ENCODE measurements at regions of chr19 and their contacts with region 1.

Region 1: GRCh38 chr19:45250832-45251451 is at the start of gene MARK4:
- DNase-seq: no peak
- H3K4me3 ChIP-seq: peak within 1 kb of the TSS; percentile 94 to 99 (median 98)
- H3K27ac ChIP-seq: peak within 1 kb of the TSS; percentile 80 to 86 (median 83)
- H3K4me1 ChIP-seq: peaks cover 31 to 62% (median 54%) of the 10 kb centered on the region in 4 donors
- H3K27me3 ChIP-seq: no peaks in the 10 kb centered on the region
- CTCF ChIP-seq: no peak
- EP300 ChIP-seq: no peak
- POLR2A ChIP-seq: no peak
- total RNA-seq, gene MARK4: 17.4 to 36.9 (median 27.5) TPM

Region 2: DNA sequence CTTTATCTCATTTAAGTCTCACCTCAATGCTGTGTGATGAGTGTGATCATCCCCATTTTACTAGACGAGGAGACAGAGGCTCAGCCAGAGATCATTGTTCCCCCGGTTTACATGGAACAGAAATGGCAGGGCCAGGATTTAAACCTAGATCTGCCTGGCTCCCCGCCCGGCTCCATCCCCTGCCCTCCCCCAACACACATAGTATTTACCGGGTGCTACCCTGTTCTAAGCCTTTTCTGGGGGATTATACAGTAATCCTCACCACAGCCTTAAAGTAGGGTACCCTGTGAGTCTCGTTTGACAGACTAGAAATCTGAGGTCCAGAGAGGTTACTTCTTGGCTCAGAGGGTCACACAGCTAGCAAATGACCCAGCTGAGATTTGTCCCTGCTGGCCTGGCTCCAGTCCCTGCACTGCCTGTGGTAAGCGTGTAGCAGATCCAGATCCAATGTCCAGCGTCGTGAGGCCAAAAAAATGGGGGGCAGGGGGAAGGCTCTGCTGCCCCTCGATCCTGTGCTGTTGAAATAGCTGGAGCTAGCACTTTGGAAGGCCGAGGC is 85.8 kb after region 1 on chr19:
- intact Hi-C with region 1: loop called (anchors 5 kb)
- DNase-seq: no peak
- H3K4me3 ChIP-seq: no peak overlapping the region
- H3K27ac ChIP-seq: no peak overlapping the region
- H3K4me1 ChIP-seq: peaks cover 4 to 21% (median 15%) of the 10 kb centered on the region in 4 donors
- H3K27me3 ChIP-seq: peaks cover 5 to 37% (median 16%) of the 10 kb centered on the region in 4 donors
- CTCF ChIP-seq: no peak
- EP300 ChIP-seq: no peak
- POLR2A ChIP-seq: no peak

Region 3: DNA sequence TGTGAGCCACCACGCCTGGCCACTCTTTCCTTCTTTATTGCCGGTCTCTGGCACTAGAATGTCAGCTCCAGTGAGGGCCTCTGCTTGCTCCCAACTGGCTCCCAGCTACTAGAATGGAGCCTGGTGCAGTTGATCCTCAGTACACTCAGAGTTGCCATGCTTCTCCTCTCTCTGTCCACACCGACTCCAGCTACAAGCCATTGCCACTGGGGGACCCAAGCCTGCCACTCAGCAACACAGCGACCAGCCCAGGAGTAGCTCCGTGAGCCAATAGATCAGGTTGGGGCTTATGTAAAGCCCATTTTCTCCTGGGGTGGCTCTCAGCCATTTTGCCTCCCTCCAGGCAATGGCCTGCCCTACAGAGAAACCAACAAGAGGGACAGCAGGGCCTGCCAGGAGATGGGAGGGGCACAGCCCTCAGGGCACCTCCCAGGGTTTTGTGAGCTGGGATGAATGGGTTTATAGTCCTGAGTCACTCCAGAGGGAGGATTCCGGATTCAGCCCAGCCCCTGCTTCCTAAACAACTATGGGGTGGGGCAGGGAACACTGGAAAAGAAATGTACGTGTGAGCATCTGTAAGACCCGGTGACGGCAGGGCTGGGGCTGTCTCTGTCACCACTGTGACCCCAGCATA is 297.2 kb after region 1 on chr19:
- intact Hi-C with region 1: no loop called
- DNase-seq: no peak
- H3K4me3 ChIP-seq: no peak overlapping the region
- H3K27ac ChIP-seq: peak overlapping the region in 1 of 4 donors; percentile 33
- H3K4me1 ChIP-seq: peaks cover 0 to 17% (median 8%) of the 10 kb centered on the region in 4 donors
- H3K27me3 ChIP-seq: no peaks in the 10 kb centered on the region
- CTCF ChIP-seq: no peak
- EP300 ChIP-seq: no peak
- POLR2A ChIP-seq: no peak

Measured in esophagus muscularis mucosa (tissue), 4 donors.